ENCODE measurements at regions of chr5 and their contacts with region 1.

Region 1: DNA sequence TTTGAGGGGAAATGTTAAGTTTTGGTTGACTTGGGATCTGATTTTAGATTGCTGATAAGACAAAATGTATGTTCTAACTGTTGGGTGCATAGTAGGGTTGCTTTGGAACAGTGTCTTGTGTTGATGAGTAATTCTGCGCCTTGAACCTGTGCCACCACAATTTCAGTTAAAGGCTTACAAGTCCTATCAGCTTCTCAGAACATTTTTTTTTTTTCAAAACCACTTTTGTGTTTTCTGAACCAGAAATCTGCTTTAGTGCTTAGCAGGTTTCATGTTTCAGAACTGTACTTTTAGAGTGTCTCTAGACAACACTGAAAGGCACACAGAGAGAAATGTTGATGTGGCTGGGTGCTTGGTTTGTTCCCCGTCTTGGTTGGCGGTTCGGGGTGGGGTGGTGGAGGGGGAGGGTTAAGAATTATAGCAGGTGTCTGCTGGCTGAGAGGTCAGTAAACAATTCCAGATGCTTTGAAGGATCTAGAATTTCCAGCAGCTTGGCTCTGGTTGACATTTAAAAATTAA is 84.6 kb downstream of the ANKRD55 start:
- DNase-seq: peak; percentile 80
- H3K4me3 Mint-ChIP-seq: peak overlapping the region; percentile 53
- H3K27ac Mint-ChIP-seq: peak overlapping the region; percentile 93
- H3K4me1 Mint-ChIP-seq: peaks cover 68% of the 10 kb centered on the region
- H3K27me3 Mint-ChIP-seq: no peaks in the 10 kb centered on the region

Region 2: GRCh38 chr5:55521881-55522280 is 626.6 kb before region 1 on chr5:
- CTCF ChIA-PET with region 1: no interaction called
- intact Hi-C with region 1: no loop called
- DNase-seq: no peak
- H3K4me3 Mint-ChIP-seq: no peak overlapping the region
- H3K27ac Mint-ChIP-seq: no peak overlapping the region
- H3K4me1 Mint-ChIP-seq: peaks cover 13% of the 10 kb centered on the region
- H3K27me3 Mint-ChIP-seq: no peaks in the 10 kb centered on the region

Region 3: GRCh38 chr5:56056875-56057274 is 91.6 kb before region 1 on chr5:
- CTCF ChIA-PET with region 1: interaction called, 3 read pairs
- intact Hi-C with region 1: loop called (anchors 1 kb)
- DNase-seq: no peak
- H3K4me3 Mint-ChIP-seq: peak overlapping the region; percentile 56
- H3K27ac Mint-ChIP-seq: peak overlapping the region; percentile 81
- H3K4me1 Mint-ChIP-seq: peaks cover 73% of the 10 kb centered on the region
- H3K27me3 Mint-ChIP-seq: no peaks in the 10 kb centered on the region

Region 4: DNA sequence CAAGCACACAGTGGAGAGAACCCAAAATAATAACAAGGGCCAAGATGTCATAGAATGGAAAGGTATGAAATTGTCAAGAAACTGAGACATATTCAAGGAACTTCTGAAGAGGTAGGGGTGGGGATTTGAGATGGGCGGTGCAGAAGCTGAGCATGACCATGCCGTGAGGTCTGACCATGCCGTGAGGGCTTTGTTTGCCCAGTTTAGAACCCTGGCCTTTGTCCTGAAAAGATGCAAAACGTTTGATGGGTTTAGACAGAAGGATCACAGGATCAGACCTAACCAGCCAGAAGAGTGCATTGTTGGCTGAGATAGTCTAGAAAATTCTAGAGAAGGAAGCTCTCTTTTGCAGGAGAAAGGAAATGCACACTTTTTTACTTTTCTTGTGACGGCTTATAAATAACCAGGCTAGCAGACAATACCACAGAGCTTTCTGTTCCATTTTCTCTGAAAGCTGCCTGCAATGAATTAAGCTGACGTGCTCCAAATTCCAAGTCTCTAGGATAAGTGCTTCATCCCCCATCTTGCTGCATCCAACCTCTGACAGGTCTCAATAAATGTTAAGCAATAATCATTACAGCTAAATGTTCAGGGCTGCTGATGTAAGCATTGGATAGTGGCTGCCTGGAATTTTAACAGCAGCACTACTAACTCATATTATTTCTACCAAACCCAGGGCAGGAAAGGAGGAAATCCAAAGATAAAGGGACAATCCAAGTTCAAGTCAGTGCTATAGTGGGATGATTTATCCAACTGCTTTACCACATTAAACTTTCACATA is 42.8 kb before region 1 on chr5:
- CTCF ChIA-PET with region 1: interaction called, 3 read pairs
- intact Hi-C with region 1: loop called (anchors 2 kb)
- DNase-seq: no peak
- H3K4me3 Mint-ChIP-seq: peak overlapping the region; percentile 58
- H3K27ac Mint-ChIP-seq: peak overlapping the region; percentile 91
- H3K4me1 Mint-ChIP-seq: peaks cover 76% of the 10 kb centered on the region
- H3K27me3 Mint-ChIP-seq: no peaks in the 10 kb centered on the region

Region 5: DNA sequence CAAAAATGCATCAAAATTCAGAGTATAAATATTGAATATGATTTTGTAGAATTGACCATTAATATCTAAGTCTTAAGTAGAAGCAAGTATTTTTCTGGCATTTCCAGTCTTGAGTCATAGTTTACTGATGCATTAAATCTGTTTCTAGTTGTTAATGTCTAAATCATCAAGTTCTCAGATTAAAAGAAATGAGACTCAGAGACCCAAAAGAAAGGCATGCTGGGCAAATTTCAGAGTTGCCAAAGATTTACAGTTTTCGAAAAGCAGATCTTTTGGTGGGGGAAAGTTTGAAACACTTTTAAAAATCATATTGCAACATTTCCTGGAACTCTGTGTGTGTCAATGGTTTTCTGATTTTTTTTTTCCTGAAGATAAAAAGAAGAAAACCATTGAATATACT is 23.7 kb after region 1 on chr5:
- CTCF ChIA-PET with region 1: interaction called, 3 read pairs
- intact Hi-C with region 1: loop called (anchors 1 kb)
- DNase-seq: no peak
- H3K4me3 Mint-ChIP-seq: peak overlapping the region; percentile 1
- H3K27ac Mint-ChIP-seq: peak overlapping the region; percentile 76
- H3K4me1 Mint-ChIP-seq: peaks cover 69% of the 10 kb centered on the region
- H3K27me3 Mint-ChIP-seq: no peaks in the 10 kb centered on the region

Region 6: GRCh38 chr5:56200856-56201666 is 52.5 kb after region 1 on chr5:
- CTCF ChIA-PET with region 1: interaction called, 6 read pairs
- intact Hi-C with region 1: loop called (anchors 2 kb)
- DNase-seq: peak; percentile 83
- H3K4me3 Mint-ChIP-seq: no peak overlapping the region
- H3K27ac Mint-ChIP-seq: no peak overlapping the region
- H3K4me1 Mint-ChIP-seq: peaks cover 28% of the 10 kb centered on the region
- H3K27me3 Mint-ChIP-seq: no peaks in the 10 kb centered on the region

Region 7: GRCh38 chr5:56269216-56269927 is 120.9 kb after region 1 on chr5:
- CTCF ChIA-PET with region 1: no interaction called
- intact Hi-C with region 1: no loop called
- DNase-seq: no peak
- H3K4me3 Mint-ChIP-seq: no peak overlapping the region
- H3K27ac Mint-ChIP-seq: no peak overlapping the region
- H3K4me1 Mint-ChIP-seq: peaks cover 17% of the 10 kb centered on the region
- H3K27me3 Mint-ChIP-seq: no peaks in the 10 kb centered on the region